Naive thymus-derived CD4-positive, alpha-beta T cell (primary cell): ENCODE measurements at regions of chr5 and their contacts with region 1.

Region 1: DNA sequence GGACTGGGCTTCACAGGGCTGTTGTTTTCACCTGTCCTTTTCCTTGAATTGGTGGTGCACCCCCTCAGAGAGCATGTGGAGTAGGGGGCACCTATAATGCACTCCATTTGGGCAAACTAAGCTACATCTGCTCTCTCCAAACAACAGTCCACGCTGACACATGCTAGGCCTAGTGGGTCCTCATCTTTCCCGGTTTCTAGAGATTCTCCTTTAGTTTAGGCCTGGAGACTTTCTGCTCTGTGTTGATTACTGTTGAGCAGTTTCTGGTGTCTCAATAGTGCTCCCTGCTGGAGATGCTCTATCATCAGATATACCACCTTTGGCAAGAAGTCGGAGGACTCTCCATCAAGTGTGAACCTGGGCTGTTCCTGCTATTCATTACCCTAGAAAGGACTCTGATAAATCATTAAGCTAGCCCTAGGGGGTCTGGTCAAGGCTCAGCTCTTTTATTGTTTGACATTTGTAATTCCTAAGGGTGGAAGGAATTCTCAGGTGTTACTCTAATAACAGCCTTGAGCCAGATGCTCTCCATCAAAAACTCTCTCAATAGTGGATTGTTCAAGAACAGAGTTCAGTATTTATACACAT is 64.0 kb upstream of the FYB1 start:
- DNase-seq: peak; percentile 14 to 83 (median 73)
- ATAC-seq: peak; percentile 99
- H3K4me3 ChIP-seq: no peak overlapping the region
- H3K4me3 Mint-ChIP-seq: peak overlapping the region in 8 of 10 donors; percentile 8 to 66 (median 57)
- H3K27ac ChIP-seq: peak overlapping the region; percentile 3
- H3K27ac Mint-ChIP-seq: peak overlapping the region in 8 of 9 donors; percentile 66 to 98 (median 86)
- H3K4me1 ChIP-seq: peaks cover 4 to 7% of the 10 kb centered on the region in 2 donors
- H3K4me1 Mint-ChIP-seq: peaks cover 18 to 52% (median 46%) of the 10 kb centered on the region in 7 donors
- H3K27me3 ChIP-seq: no peaks in the 10 kb centered on the region
- H3K27me3 Mint-ChIP-seq: peaks cover 0 to 23% (median 8%) of the 10 kb centered on the region in 5 donors

Region 2: DNA sequence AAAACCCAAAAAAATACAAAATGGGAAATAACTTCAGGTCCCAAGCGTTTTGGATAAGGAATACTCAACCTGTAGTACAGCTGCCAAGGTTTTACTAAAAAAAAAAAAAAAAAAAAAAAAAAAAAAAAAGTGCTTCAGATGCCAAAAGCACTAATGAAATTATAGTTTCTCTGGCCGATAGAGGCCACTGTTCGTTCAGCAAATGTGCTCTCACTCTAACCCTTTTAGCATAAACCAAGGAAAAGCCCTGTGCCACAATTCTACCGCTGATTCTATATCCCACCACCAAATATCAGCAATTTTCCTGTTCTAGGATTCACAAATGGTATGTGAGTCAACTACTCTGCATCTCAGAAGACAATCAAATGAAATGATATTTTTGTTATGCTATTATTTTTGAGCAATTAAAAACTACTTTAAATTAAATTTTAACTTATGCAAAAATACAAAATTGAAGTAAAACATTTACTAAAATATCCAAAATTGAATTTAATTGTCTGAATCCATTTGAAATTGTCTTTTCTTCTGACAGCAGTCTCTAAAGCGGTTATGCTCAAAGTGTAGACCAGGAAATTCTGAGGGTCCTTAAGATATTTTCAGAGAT is 288.9 kb before region 1 on chr5:
- CTCF ChIA-PET with region 1: no interaction called
- POLR2A ChIA-PET with region 1: no interaction called
- intact Hi-C with region 1: loop called in 1 of 2 experiments (anchors 1 kb)
- DNase-seq: peak in 7 of 9 donors; percentile 2 to 57 (median 39)
- ATAC-seq: peak; percentile 63
- H3K4me3 ChIP-seq: no peak overlapping the region
- H3K4me3 Mint-ChIP-seq: no peak overlapping the region
- H3K27ac ChIP-seq: no peak overlapping the region
- H3K27ac Mint-ChIP-seq: peak overlapping the region in 1 of 9 donors; percentile 75
- H3K4me1 ChIP-seq: no peaks in the 10 kb centered on the region
- H3K4me1 Mint-ChIP-seq: peaks cover 4 to 39% (median 25%) of the 10 kb centered on the region in 7 donors
- H3K27me3 ChIP-seq: no peaks in the 10 kb centered on the region
- H3K27me3 Mint-ChIP-seq: no peaks in the 10 kb centered on the region

Region 3: GRCh38 chr5:39148983-39149534 is 134.3 kb before region 1 on chr5:
- CTCF ChIA-PET with region 1: interaction called, 37 read pairs
- POLR2A ChIA-PET with region 1: interaction called, 4 read pairs
- intact Hi-C with region 1: loop called (anchors 1 kb)
- DNase-seq: peak in 6 of 9 donors; percentile 28 to 55 (median 48)
- ATAC-seq: peak; percentile 44
- H3K4me3 ChIP-seq: no peak overlapping the region
- H3K4me3 Mint-ChIP-seq: peak overlapping the region in 6 of 10 donors; percentile 7 to 63 (median 36)
- H3K27ac ChIP-seq: peak overlapping the region; percentile 64
- H3K27ac Mint-ChIP-seq: peak overlapping the region; percentile 66 to 94 (median 82)
- H3K4me1 ChIP-seq: peaks cover 19 to 55% of the 10 kb centered on the region in 2 donors
- H3K4me1 Mint-ChIP-seq: peaks cover 58 to 90% (median 72%) of the 10 kb centered on the region in 7 donors
- H3K27me3 ChIP-seq: no peaks in the 10 kb centered on the region
- H3K27me3 Mint-ChIP-seq: no peaks in the 10 kb centered on the region

Region 4: GRCh38 chr5:39202597-39203274 is 80.6 kb before region 1 on chr5:
- CTCF ChIA-PET with region 1: interaction called, 21 read pairs
- POLR2A ChIA-PET with region 1: interaction called, 6 read pairs
- intact Hi-C with region 1: loop called in 1 of 2 experiments (anchors 1 kb)
- DNase-seq: peak in 7 of 9 donors; percentile 57 to 72 (median 66)
- ATAC-seq: peak; percentile 82
- H3K4me3 ChIP-seq: peak overlapping the region; percentile 82
- H3K4me3 Mint-ChIP-seq: peak overlapping the region; percentile 75 to 100 (median 96)
- H3K27ac ChIP-seq: peak overlapping the region; percentile 93
- H3K27ac Mint-ChIP-seq: peak overlapping the region; percentile 86 to 99 (median 98)
- H3K4me1 ChIP-seq: peaks cover 43 to 48% of the 10 kb centered on the region in 2 donors
- H3K4me1 Mint-ChIP-seq: peaks cover 28 to 45% (median 44%) of the 10 kb centered on the region in 7 donors
- H3K27me3 ChIP-seq: no peaks in the 10 kb centered on the region
- H3K27me3 Mint-ChIP-seq: no peaks in the 10 kb centered on the region

Region 5: GRCh38 chr5:39262981-39263380 is 20.3 kb before region 1 on chr5:
- CTCF ChIA-PET with region 1: no interaction called
- POLR2A ChIA-PET with region 1: interaction called, 3 read pairs
- intact Hi-C with region 1: loop called in 1 of 2 experiments (anchors 2 kb)
- DNase-seq: no peak
- ATAC-seq: peak; percentile 48
- H3K4me3 ChIP-seq: no peak overlapping the region
- H3K4me3 Mint-ChIP-seq: no peak overlapping the region
- H3K27ac ChIP-seq: no peak overlapping the region
- H3K27ac Mint-ChIP-seq: no peak overlapping the region
- H3K4me1 ChIP-seq: peaks cover 0 to 4% of the 10 kb centered on the region in 2 donors
- H3K4me1 Mint-ChIP-seq: peaks cover 5 to 28% (median 17%) of the 10 kb centered on the region in 7 donors
- H3K27me3 ChIP-seq: no peaks in the 10 kb centered on the region
- H3K27me3 Mint-ChIP-seq: no peaks in the 10 kb centered on the region